Calu3 (cell line): ENCODE measurements at regions of chr11 and their contacts with region 1.

Region 1: DNA sequence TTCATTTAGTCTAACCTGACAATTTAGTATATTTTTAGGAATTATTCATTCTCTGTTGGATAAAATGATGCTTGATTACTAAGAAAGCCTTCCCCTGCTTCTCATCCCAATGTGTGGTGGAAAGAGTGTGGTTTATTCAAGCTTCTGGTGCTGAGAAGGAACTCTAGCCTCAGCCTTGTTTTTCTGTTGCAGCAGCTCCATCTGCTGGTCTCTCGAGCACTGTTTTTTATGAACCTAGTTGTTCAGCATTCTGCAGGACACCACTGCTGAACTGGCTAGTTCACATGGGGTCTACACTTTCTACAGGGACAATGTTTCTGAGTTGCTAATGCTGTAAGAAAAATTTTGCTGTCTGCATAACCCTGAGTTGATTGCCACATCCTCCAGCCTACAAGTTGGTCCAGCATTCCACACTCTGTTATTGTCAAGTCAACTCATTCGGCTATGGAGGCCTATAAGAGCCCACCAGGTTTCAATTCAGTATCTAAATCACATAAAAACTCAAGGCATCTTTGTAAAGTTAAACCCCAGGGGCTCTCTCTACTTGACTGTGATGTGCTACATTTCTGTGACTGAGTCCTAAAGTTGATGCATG is 14.3 kb downstream of the OR2AG2 start:
- DNase-seq: peak; percentile 37
- H3K4me3 Mint-ChIP-seq: no peak overlapping the region
- H3K27ac Mint-ChIP-seq: no peak overlapping the region
- H3K4me1 Mint-ChIP-seq: no peaks in the 10 kb centered on the region
- H3K27me3 Mint-ChIP-seq: peaks cover 56% of the 10 kb centered on the region
- CTCF ChIP-seq: peak; percentile 27

Region 2: GRCh38 chr11:6705905-6706535 is 51.5 kb before region 1 on chr11:
- CTCF ChIA-PET with region 1: interaction called, 5 read pairs
- intact Hi-C with region 1: loop called (anchors 1 kb)
- DNase-seq: peak; percentile 50
- H3K4me3 Mint-ChIP-seq: no peak overlapping the region
- H3K27ac Mint-ChIP-seq: no peak overlapping the region
- H3K4me1 Mint-ChIP-seq: no peaks in the 10 kb centered on the region
- H3K27me3 Mint-ChIP-seq: peaks cover 50% of the 10 kb centered on the region
- CTCF ChIP-seq: peak; percentile 65

Region 3: DNA sequence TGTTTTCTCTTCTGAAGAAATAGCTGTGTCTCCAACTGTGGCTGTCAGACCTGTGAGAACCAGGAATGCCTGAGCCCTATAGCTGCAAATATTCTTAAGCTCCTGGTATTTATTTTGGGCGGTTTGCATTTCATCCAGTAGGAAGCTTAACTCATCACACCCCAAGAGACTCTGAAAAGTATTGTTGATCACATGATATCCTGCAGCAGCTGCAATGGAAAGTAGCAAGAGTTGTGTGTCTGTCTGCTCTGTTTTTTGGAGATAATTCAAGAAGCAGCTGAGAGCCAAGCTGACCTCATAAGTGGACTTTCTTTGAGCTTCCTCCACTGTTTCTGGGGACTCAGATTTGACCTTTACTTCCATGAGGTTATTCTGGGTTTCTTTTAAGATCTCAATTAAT is 37.9 kb before region 1 on chr11:
- CTCF ChIA-PET with region 1: no interaction called
- intact Hi-C with region 1: no loop called
- DNase-seq: no peak
- H3K4me3 Mint-ChIP-seq: no peak overlapping the region
- H3K27ac Mint-ChIP-seq: no peak overlapping the region
- H3K4me1 Mint-ChIP-seq: no peaks in the 10 kb centered on the region
- H3K27me3 Mint-ChIP-seq: peaks cover 92% of the 10 kb centered on the region
- CTCF ChIP-seq: no peak

Region 4: DNA sequence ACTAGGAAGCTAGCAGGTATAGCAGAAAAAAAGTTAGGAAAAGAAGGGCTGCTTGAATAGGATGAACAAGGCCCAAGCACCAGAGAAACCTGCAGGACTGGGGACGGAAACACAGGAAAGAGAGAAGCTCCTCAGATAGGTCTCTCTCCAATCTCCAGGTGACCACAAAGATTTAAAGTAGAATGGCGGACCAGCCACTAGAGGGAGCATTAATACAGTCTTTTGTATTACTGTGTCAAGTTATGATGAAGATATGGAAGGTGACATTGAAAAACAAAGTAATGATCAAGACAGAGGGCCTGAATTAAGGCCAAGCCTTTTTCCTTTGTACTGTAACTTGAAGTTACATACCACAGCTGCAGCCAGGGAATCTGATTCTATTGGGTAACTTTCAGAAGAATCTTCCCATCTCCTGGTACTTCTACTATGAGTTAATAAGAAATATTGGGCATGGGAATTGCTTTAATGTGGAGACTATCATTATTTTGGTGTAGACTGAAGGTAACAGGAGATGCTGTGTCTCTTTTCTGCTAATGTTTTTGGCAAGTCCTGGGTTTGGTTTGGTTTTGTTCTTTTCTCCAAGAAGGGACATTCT is 19.5 kb before region 1 on chr11:
- CTCF ChIA-PET with region 1: interaction called, 6 read pairs
- intact Hi-C with region 1: loop called (anchors 1 kb)
- DNase-seq: peak; percentile 50
- H3K4me3 Mint-ChIP-seq: no peak overlapping the region
- H3K27ac Mint-ChIP-seq: no peak overlapping the region
- H3K4me1 Mint-ChIP-seq: no peaks in the 10 kb centered on the region
- H3K27me3 Mint-ChIP-seq: peaks cover 86% of the 10 kb centered on the region
- CTCF ChIP-seq: peak; percentile 29

Region 5: DNA sequence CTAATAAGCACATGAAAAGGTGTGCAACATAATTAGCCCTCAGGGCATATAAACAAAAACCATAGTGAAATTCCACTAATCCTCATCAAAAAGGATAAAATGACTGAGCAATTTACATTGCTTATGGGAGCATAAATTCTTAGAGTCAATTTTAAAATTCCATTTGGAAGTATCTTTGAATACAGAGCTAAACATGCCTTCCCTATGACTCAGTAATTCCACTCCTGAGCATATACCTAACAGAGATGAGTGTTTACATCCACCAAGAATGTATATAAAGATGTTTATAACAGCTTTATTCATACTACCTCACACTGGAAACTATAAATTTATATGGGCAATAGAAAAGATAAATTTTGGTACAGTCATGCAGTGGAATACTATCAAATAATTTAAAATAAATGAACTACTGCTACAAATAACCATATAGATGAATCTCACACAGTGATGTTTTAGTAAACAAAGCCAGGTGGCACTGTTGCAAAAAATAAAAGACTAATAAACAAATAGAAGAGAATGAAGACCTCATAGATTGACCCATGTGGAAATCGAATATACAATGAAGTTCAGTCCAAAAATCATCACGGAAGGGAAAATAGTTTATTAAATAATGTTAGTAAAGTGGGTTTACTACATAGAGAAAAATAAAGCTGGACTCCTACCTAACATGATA is 143.0 kb after region 1 on chr11:
- CTCF ChIA-PET with region 1: no interaction called
- intact Hi-C with region 1: no loop called
- DNase-seq: no peak
- H3K4me3 Mint-ChIP-seq: no peak overlapping the region
- H3K27ac Mint-ChIP-seq: no peak overlapping the region
- H3K4me1 Mint-ChIP-seq: no peaks in the 10 kb centered on the region
- H3K27me3 Mint-ChIP-seq: peaks cover 23% of the 10 kb centered on the region
- CTCF ChIP-seq: no peak